GM12878 (cell line): ENCODE measurements at regions of chr21 and their contacts with region 1.

Region 1: DNA sequence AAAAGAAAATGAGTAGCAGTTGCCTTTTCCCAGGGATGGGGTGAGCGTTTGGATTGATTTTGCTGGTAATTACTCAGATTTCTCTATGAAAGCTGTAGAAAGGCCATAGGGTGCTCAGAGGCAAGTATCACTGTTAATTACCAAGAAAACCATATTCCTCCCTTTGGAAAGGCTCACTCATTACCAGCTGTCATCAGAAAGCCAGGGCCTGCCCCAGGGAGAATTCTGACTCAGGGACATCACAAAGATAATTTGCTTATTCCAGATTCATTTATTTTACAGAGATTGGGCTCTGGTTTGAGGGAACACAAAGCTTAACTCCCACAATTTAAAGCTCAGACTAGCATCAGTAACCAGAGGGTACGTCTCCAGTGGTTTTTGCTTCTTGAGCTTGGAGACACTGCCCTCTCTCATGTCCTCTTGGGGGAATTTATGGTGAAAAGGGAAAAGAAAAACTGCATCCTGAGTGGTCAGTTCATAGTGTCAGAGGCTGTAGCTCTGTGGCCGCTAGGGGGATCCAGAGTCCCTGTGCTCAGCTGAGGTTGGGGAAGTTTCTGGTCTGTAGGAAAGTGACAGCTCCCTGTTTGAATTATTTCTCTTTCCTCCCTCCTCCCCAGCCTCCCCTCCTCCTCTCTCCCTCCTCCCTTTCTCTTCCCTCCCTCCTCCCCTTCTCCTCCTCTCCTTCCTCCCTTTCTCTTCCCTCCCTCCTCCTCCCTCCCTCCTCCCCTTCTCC is 204.3 kb downstream of the KCNJ6 start:
- DNase-seq: no peak
- ATAC-seq: peak; percentile 97
- H3K4me3 ChIP-seq: no peak overlapping the region
- H3K27ac ChIP-seq: no peak overlapping the region
- H3K4me1 ChIP-seq: no peaks in the 10 kb centered on the region
- H3K27me3 ChIP-seq: no peaks in the 10 kb centered on the region
- CTCF ChIP-seq: peak; percentile 85 to 95 (median 89)
- EP300 ChIP-seq: no peak
- POLR2A ChIP-seq: no peak
- RAD21 ChIP-seq: peak; percentile 74

Region 2: GRCh38 chr21:37700641-37701202 is 11.3 kb before region 1 on chr21:
- CTCF ChIA-PET with region 1: interaction called, 21 read pairs
- POLR2A ChIA-PET with region 1: no interaction called
- RAD21 ChIA-PET with region 1: interaction called, 7 read pairs
- SMC1A ChIA-PET with region 1: interaction called, 3 read pairs
- in situ Hi-C with region 1: no loop called
- intact Hi-C with region 1: no loop called
- DNase-seq: peak; percentile 56
- ATAC-seq: peak; percentile 99
- H3K4me3 ChIP-seq: no peak overlapping the region
- H3K27ac ChIP-seq: no peak overlapping the region
- H3K4me1 ChIP-seq: no peaks in the 10 kb centered on the region; the same call in 1 of the 2 replicates
- H3K27me3 ChIP-seq: peaks cover 0 to 1% of the 10 kb centered on the region in 2 experiments; a peak in 1 of 4 replicates
- CTCF ChIP-seq: peak; percentile 59 to 66 (median 66)
- EP300 ChIP-seq: no peak
- POLR2A ChIP-seq: no peak
- RAD21 ChIP-seq: peak; percentile 62